Naive thymus-derived CD4-positive, alpha-beta T cell (primary cell): ENCODE measurements at regions of chr6 and their contacts with region 1.

Region 1: GRCh38 chr6:143060354-143060805 is 309 bp upstream of the AIG1 start:
- DNase-seq: peak; percentile 63 to 82 (median 72)
- ATAC-seq: peak; percentile 85
- H3K4me3 ChIP-seq: peak overlapping the region; percentile 73
- H3K4me3 Mint-ChIP-seq: peak overlapping the region; percentile 88 to 98 (median 94)
- H3K27ac ChIP-seq: peak overlapping the region; percentile 79
- H3K27ac Mint-ChIP-seq: peak overlapping the region; percentile 92 to 98 (median 96)
- H3K4me1 ChIP-seq: peaks cover 8% of the 10 kb centered on the region in 2 donors
- H3K4me1 Mint-ChIP-seq: peaks cover 16 to 34% (median 28%) of the 10 kb centered on the region in 7 donors
- H3K27me3 ChIP-seq: no peaks in the 10 kb centered on the region
- H3K27me3 Mint-ChIP-seq: no peaks in the 10 kb centered on the region

Region 2: DNA sequence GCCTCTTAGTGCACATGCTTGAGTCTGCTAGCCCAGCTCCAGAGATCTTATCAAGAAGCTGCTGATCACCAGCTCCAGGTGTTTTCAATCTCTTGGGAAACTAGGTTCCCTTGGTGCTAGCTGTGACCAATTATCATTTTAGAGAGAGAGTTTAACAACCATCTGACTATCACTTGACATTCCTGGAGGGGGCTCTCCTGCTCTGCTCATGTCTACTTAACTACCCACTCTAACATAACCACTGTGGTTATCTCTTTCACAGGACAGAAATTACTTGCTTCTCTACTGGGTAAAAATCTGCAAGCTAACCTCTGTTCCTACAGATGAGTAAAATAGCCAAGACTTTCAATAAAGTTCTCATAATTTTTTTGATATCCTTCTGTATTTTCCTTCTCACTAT is 1751.1 kb before region 1 on chr6:
- CTCF ChIA-PET with region 1: no interaction called
- POLR2A ChIA-PET with region 1: no interaction called
- intact Hi-C with region 1: no loop called
- DNase-seq: peak in 2 of 9 donors; percentile 4 to 15
- ATAC-seq: peak; percentile 62
- H3K4me3 ChIP-seq: no peak overlapping the region
- H3K4me3 Mint-ChIP-seq: no peak overlapping the region
- H3K27ac ChIP-seq: no peak overlapping the region
- H3K27ac Mint-ChIP-seq: no peak overlapping the region
- H3K4me1 ChIP-seq: no peaks in the 10 kb centered on the region
- H3K4me1 Mint-ChIP-seq: no peaks in the 10 kb centered on the region
- H3K27me3 ChIP-seq: no peaks in the 10 kb centered on the region
- H3K27me3 Mint-ChIP-seq: peaks cover 0 to 7% (median 0%) of the 10 kb centered on the region in 5 donors

Region 3: DNA sequence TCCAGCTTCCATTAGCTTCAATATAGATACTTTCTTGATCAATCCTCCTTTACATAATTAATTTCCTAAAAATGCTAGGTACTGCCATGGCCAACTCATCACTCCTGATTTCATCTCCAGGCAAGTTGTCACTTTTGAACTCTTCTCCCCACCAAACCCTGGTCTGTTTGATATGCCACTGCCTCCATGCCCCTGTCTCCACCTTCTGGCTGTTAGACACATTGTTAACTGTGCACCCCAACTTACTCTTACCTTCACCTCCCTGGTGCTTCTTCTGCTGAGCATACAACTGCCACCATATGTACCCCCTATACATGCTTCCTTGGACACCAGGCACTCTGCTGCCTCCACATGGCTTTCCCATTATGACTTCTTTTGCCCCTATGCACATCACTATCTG is 21.5 kb before region 1 on chr6:
- CTCF ChIA-PET with region 1: no interaction called
- POLR2A ChIA-PET with region 1: no interaction called
- intact Hi-C with region 1: loop called in 1 of 2 experiments (anchors 2 kb)
- DNase-seq: peak in 3 of 9 donors; percentile 11 to 21 (median 12)
- ATAC-seq: no peak
- H3K4me3 ChIP-seq: no peak overlapping the region
- H3K4me3 Mint-ChIP-seq: no peak overlapping the region
- H3K27ac ChIP-seq: no peak overlapping the region
- H3K27ac Mint-ChIP-seq: no peak overlapping the region
- H3K4me1 ChIP-seq: no peaks in the 10 kb centered on the region
- H3K4me1 Mint-ChIP-seq: peaks cover 0 to 12% (median 8%) of the 10 kb centered on the region in 7 donors
- H3K27me3 ChIP-seq: peaks cover 0 to 4% of the 10 kb centered on the region in 2 donors
- H3K27me3 Mint-ChIP-seq: peaks cover 0 to 17% (median 6%) of the 10 kb centered on the region in 5 donors

Region 4: DNA sequence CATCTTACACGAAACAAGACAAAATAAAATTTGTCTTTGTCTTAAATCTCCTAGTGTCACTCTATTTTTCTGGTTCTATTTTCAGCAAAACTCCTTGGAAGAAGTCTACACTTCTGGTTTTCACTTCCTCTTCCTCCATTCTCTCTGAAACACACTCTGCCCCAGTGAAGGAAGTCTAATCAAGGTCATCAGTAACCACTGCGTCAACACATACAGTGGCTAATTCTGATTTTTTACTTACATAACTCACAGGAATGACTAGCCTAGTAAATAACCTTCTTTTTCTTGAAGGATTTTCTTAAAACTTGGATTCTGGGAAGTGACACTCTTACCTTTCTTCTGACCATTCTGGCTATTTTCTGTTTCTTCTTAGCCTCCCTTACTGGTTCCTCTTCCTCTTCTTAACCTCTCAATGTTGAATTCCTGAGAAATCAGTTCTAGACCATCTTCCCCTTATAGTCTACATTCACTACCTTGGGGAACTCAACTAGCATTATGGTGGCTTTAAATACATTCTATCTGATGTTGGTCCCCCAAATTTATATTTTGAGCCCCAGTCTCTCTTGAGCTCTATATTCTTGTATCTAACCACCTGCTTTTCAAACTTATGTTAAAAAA is 37.8 kb after region 1 on chr6:
- CTCF ChIA-PET with region 1: no interaction called
- POLR2A ChIA-PET with region 1: no interaction called
- intact Hi-C with region 1: loop called in 1 of 2 experiments (anchors 1 kb)
- DNase-seq: peak in 3 of 9 donors; percentile 5 to 21 (median 9)
- ATAC-seq: peak; percentile 80
- H3K4me3 ChIP-seq: no peak overlapping the region
- H3K4me3 Mint-ChIP-seq: no peak overlapping the region
- H3K27ac ChIP-seq: no peak overlapping the region
- H3K27ac Mint-ChIP-seq: no peak overlapping the region
- H3K4me1 ChIP-seq: peaks cover 12 to 22% of the 10 kb centered on the region in 2 donors
- H3K4me1 Mint-ChIP-seq: peaks cover 0 to 13% (median 5%) of the 10 kb centered on the region in 7 donors
- H3K27me3 ChIP-seq: no peaks in the 10 kb centered on the region
- H3K27me3 Mint-ChIP-seq: no peaks in the 10 kb centered on the region

Region 5: GRCh38 chr6:143450453-143451371 is 390.3 kb after region 1 on chr6 and contains the starts of genes ADAT2 and PEX3:
- CTCF ChIA-PET with region 1: no interaction called
- POLR2A ChIA-PET with region 1: interaction called, 5 read pairs
- intact Hi-C with region 1: loop called (anchors 2 to 5 kb)
- DNase-seq: peak; percentile 87 to 95 (median 94)
- ATAC-seq: peak; percentile 98
- H3K4me3 ChIP-seq: peak within 1 kb of the TSS; percentile 89
- H3K4me3 Mint-ChIP-seq: peak within 1 kb of the TSS; percentile 84 to 100 (median 99)
- H3K27ac ChIP-seq: peak within 1 kb of the TSS; percentile 80
- H3K27ac Mint-ChIP-seq: peak within 1 kb of the TSS; percentile 93 to 99 (median 96)
- H3K4me1 ChIP-seq: peaks cover 14 to 18% of the 10 kb centered on the region in 2 donors
- H3K4me1 Mint-ChIP-seq: peaks cover 20 to 61% (median 49%) of the 10 kb centered on the region in 7 donors
- H3K27me3 ChIP-seq: no peaks in the 10 kb centered on the region
- H3K27me3 Mint-ChIP-seq: no peaks in the 10 kb centered on the region
- total RNA-seq, gene ADAT2: 18.4 to 25.8 (median 20.8) TPM
- total RNA-seq, gene PEX3: 10.9 to 28.8 (median 19.1) TPM